Psoas muscle (tissue), 8 donors: ENCODE measurements at regions of chr20 and their contacts with region 1.

Region 1: DNA sequence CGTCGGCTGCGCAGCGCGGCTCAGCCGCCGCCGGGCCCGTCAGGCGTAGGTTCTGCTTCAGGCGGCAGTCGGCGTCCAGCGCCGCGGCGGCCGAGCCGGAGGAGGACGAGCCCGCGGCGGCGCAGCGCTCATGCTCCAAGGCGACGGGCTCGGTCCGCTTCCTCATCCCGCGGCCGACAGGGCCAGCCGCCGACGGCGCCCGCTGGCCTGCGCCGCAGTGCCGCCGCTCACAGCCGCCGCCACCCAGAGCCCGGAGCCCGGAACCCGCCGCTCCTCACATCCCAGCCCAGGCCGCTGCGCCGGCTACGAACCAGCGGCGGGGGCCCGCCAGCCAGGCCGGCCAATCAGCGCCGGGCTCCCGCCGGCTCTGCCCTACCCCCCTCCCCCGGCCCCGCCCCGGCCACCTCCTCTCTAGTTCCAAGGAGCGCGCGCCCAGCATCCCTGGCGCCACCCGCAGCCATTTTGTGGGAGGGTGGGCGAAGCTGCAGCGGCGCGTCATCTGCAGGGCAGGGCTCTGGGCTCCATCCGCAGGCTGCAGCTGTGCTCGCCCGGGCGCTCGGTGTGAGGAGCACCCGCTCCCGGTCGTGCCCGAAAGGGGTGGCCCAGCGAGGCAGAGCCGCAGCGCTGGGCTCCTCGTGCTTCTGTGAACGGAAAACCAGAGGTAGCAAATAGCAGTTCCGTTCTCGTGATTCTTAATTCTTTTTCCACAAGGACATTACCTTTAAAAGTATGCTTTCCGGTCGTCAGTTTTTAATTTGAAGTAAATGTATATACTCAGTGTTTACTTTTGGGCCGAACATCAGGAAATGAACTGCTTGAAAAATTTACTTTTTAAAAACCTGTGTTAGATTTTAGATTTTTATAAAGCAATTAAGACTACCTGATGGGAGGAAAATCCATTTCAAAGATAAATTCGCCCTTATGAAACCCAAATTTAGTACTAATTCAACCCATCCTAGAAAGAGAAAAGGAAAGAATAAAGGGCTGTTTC is at the start of gene ABHD12:
- DNase-seq: peak; percentile 97 to 98
- ATAC-seq: peak; percentile 99
- H3K4me3 ChIP-seq: peak within 1 kb of the TSS; percentile 78
- H3K27ac ChIP-seq: peak within 1 kb of the TSS; percentile 85
- H3K4me1 ChIP-seq: peaks cover 3% of the 10 kb centered on the region
- H3K27me3 ChIP-seq: no peaks in the 10 kb centered on the region
- CTCF ChIP-seq: no peak
- total RNA-seq, gene ABHD12: 7.9 to 10.9 (median 8.8) TPM

Region 2: GRCh38 chr20:25273541-25274358 is 117.1 kb before region 1 on chr20:
- intact Hi-C with region 1: loop called in 1 of 2 experiments (anchors 10 kb)
- DNase-seq: peak; percentile 31 to 79
- ATAC-seq: peak; percentile 73 to 88 (median 80)
- H3K4me3 ChIP-seq: peak overlapping the region; percentile 48
- H3K27ac ChIP-seq: peak overlapping the region; percentile 75
- H3K4me1 ChIP-seq: peaks cover 29% of the 10 kb centered on the region
- H3K27me3 ChIP-seq: no peaks in the 10 kb centered on the region
- CTCF ChIP-seq: no peak

Region 3: DNA sequence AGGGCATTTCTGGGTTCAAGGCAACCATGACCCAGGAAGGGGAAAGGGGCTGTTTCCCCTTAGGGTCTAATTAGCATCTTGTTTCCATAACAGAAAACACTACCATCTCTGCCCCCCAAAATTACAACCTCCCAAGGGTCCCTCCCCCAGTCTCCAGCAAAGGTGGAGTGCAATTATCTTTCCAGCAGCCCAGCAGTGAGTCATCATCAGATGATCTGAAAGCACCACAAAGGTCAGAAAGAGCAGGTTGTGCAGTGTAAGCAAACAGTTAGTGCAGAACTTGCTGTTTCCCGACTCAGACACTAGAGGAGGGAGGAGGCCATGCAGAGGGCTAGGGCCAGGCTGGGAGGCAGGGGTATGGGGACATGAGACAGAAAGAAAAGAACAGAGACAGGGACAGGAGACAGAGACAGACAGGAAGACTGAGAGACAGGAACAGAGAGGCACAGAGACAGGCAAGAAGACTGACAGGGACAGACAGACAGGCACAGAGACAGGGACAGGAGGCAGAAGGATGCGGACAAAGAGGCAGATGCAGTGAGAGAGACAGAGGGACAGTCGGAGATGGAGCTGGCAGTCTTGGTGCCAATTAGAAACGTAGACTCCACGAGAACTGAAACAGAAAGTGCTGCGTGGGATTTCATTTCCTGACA is 80.4 kb before region 1 on chr20:
- intact Hi-C with region 1: loop called in 1 of 2 experiments (anchors 10 kb)
- DNase-seq: no peak
- ATAC-seq: peak; percentile 85 to 87 (median 86)
- H3K4me3 ChIP-seq: peak overlapping the region; percentile 6
- H3K27ac ChIP-seq: peak overlapping the region; percentile 78
- H3K4me1 ChIP-seq: peaks cover 22% of the 10 kb centered on the region
- H3K27me3 ChIP-seq: no peaks in the 10 kb centered on the region
- CTCF ChIP-seq: peak; percentile 20